Activated naive CD4-positive, alpha-beta T cell treated with anti-CD3 and anti-CD28 coated beads, Interleukin-2, amount 10 ng/mL, durations not matched to agents 7 days and 5 days (primary cell): ENCODE measurements at regions of chr7 and their contacts with region 1.

Region 1: DNA sequence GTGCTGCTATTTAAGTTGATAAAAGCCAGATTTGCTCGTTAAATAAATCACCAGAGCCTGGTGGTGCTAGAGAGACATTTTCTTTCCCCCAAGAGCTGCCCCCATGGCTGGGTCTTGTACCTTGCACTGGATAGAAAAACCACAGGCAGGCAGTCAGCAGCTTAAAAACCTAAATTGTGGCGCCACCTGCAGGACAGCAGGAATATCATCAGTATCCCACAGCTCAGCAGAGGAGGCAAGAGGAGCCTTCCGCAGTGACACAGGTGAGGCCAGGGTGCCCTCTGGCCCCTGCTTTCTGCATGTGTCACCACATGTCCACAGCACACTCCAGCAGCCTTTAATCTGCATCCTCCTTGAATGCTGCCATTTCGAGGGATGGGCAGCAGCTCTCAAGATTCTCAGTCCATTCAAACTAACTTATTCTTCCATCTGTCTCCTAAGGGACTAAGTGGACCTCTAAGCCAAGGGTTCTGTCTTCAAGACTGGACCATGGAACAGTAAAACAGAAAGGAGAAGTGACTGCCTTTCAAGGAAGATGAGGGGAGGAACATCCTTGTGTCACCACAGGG is 4.5 kb upstream of the PLXNA4 start:
- DNase-seq: peak; percentile 87
- H3K4me3 Mint-ChIP-seq: no peak overlapping the region
- H3K27ac Mint-ChIP-seq: no peak overlapping the region
- H3K4me1 Mint-ChIP-seq: peaks cover 13% of the 10 kb centered on the region
- H3K27me3 Mint-ChIP-seq: peaks cover 70% of the 10 kb centered on the region

Region 2: GRCh38 chr7:131688738-131689661 is 891.8 kb before region 1 on chr7:
- CTCF ChIA-PET with region 1: interaction called, 18 read pairs
- DNase-seq: peak; percentile 71
- H3K4me3 Mint-ChIP-seq: no peak overlapping the region
- H3K27ac Mint-ChIP-seq: no peak overlapping the region
- H3K4me1 Mint-ChIP-seq: peaks cover 4% of the 10 kb centered on the region
- H3K27me3 Mint-ChIP-seq: peaks cover 37% of the 10 kb centered on the region

Region 3: GRCh38 chr7:131945313-131945911 is 635.4 kb before region 1 on chr7:
- CTCF ChIA-PET with region 1: interaction called, 10 read pairs
- DNase-seq: peak; percentile 61
- H3K4me3 Mint-ChIP-seq: no peak overlapping the region
- H3K27ac Mint-ChIP-seq: no peak overlapping the region
- H3K4me1 Mint-ChIP-seq: no peaks in the 10 kb centered on the region
- H3K27me3 Mint-ChIP-seq: peaks cover 29% of the 10 kb centered on the region

Region 4: DNA sequence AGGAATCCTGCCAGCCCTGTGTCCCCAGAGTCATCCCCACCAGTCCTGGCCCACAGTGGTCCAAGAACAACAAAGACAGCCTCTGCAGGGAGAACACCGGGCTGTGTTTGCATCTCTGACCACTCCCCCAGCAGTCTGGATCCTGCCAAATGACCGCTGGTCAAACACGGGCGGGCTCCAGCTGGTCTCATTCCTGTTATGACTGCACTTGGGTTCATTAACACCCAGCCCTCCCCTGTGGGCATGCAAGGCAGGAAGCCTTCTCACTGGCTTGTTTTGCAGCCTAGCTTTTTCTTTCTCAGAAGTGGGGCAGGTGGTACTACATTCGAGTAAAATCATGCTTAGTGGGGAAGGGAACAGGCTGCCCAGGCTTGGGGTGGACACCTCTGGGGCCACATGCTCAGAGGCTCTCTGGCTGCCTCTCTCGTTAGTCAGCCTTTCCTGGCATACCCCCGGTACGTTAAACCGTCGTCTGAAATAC is 194.6 kb before region 1 on chr7:
- CTCF ChIA-PET with region 1: interaction called, 240 read pairs
- DNase-seq: no peak
- H3K4me3 Mint-ChIP-seq: no peak overlapping the region
- H3K27ac Mint-ChIP-seq: no peak overlapping the region
- H3K4me1 Mint-ChIP-seq: peaks cover 6% of the 10 kb centered on the region
- H3K27me3 Mint-ChIP-seq: peaks cover 69% of the 10 kb centered on the region

Region 5: GRCh38 chr7:132450188-132450587 is 130.6 kb before region 1 on chr7:
- CTCF ChIA-PET with region 1: interaction called, 18 read pairs
- DNase-seq: peak; percentile 39
- H3K4me3 Mint-ChIP-seq: no peak overlapping the region
- H3K27ac Mint-ChIP-seq: peak overlapping the region; percentile 58
- H3K4me1 Mint-ChIP-seq: peaks cover 96% of the 10 kb centered on the region
- H3K27me3 Mint-ChIP-seq: peaks cover 11% of the 10 kb centered on the region

Region 6: DNA sequence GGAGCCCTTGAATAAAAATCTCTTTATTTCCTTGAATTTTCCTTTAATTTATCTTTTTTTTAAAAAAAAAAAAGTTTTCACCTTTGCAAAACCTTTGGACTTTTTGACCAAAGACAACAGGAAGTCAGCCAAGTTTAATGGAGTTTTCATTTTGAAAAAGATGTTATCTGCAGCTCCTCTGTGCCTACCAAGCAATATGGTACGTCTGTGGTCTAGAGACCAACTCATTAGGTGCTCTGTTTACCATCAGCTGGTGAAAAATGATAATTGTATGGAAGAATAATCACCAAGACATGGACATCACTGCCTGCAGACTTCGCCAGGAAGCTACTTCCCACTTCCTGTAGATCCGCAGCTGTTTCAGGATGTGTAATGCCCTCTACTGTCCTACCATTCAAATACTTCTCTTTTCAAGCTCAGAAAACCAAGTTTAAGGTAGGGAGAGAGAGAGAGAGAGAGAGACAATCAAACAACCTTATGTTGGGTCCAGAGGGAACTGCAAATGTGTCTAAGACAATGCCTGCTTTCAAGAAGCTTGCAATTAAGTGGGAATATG is 23.2 kb before region 1 on chr7:
- CTCF ChIA-PET with region 1: interaction called, 12 read pairs
- DNase-seq: no peak
- H3K4me3 Mint-ChIP-seq: no peak overlapping the region
- H3K27ac Mint-ChIP-seq: no peak overlapping the region
- H3K4me1 Mint-ChIP-seq: peaks cover 37% of the 10 kb centered on the region
- H3K27me3 Mint-ChIP-seq: peaks cover 43% of the 10 kb centered on the region